ENCODE measurements at regions of chr19 and their contacts with region 1.

Region 1: GRCh38 chr19:47348819-47349795 is at the start of gene DHX34:
- DNase-seq: peak; percentile 99
- H3K4me3 ChIP-seq: peak within 1 kb of the TSS; percentile 86
- H3K4me3 Mint-ChIP-seq: peak within 1 kb of the TSS; percentile 95
- H3K27ac Mint-ChIP-seq: peak within 1 kb of the TSS; percentile 88
- H3K4me1 ChIP-seq: no peaks in the 10 kb centered on the region
- H3K4me1 Mint-ChIP-seq: peaks cover 27% of the 10 kb centered on the region
- H3K27me3 ChIP-seq: no peaks in the 10 kb centered on the region
- H3K27me3 Mint-ChIP-seq: no peaks in the 10 kb centered on the region
- CTCF ChIP-seq: peak; percentile 97 to 98
- total RNA-seq, gene DHX34: 28.7 TPM in 2 replicates

Region 2: DNA sequence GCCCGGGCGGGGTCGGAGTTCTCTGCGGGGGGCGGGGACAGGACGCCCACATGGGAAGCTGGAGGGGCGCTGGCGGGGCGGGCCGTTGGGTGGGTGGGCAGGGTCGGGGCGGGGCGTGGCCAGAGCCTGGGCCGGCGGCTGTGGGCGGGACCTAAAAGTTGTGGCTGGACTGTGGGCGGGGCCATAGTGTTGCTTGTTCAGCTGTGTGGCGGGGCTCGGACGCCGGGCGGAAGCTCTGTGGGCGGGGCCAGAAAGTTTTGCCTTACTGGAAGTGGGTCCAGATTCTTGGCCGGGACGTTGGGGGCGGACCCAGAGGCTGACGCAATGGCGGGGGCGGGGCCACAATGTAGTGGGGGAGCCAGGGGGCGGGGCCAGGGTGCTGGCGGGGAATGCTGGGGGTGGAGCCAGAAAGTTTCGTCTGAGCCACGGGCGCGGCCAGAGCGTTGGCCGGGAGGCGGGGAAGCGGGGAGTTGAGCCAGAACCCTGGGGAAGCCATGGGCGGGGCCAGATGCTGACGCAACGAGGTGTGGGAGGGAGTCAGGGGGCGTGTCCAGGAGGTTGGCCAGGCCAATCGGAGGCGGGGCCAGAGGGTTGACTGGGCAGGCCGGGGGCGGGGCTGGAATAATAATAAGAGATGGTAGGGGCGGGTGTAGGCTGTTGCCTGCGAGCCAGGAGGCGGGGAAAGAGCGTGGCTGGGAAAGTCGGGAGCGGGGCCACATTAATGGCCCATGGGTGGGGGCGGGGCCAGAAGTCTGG is 92.2 kb before region 1 on chr19:
- CTCF ChIA-PET with region 1: interaction called, 4 read pairs
- POLR2A ChIA-PET with region 1: interaction called, 12 read pairs
- intact Hi-C with region 1: no loop called
- DNase-seq: peak; percentile 100
- H3K4me3 ChIP-seq: peak overlapping the region; percentile 76
- H3K4me3 Mint-ChIP-seq: peak overlapping the region; percentile 92
- H3K27ac Mint-ChIP-seq: peak overlapping the region; percentile 96
- H3K4me1 ChIP-seq: peaks cover 22% of the 10 kb centered on the region
- H3K4me1 Mint-ChIP-seq: peaks cover 14% of the 10 kb centered on the region
- H3K27me3 ChIP-seq: no peaks in the 10 kb centered on the region
- H3K27me3 Mint-ChIP-seq: no peaks in the 10 kb centered on the region
- CTCF ChIP-seq: no peak

Region 3: DNA sequence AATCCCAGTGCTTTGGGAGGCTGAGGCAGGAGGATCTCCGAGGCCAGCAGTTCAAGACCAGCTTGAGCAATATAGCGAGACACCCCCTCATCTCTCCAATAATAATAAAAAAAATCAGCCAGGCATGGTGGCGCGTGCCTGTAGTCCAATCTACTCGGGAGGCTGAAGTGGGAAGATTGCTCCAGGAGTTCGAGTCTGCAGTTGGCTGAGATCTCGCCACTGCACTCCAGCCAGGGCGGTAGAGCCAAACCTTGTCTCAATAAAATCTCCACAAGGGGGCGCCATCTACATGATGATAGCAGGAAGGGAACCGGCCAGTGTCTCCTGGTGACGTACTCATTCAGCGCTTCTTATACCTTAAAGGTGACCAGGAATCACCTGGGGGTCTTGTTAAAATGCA is 53.1 kb before region 1 on chr19:
- CTCF ChIA-PET with region 1: interaction called, 8 read pairs
- POLR2A ChIA-PET with region 1: interaction called, 9 read pairs
- intact Hi-C with region 1: loop called (anchors 5 kb)
- DNase-seq: peak; percentile 89 to 92
- H3K4me3 ChIP-seq: no peak overlapping the region
- H3K4me3 Mint-ChIP-seq: no peak overlapping the region
- H3K27ac Mint-ChIP-seq: peak overlapping the region; percentile 64
- H3K4me1 ChIP-seq: no peaks in the 10 kb centered on the region
- H3K4me1 Mint-ChIP-seq: peaks cover 7% of the 10 kb centered on the region
- H3K27me3 ChIP-seq: no peaks in the 10 kb centered on the region
- H3K27me3 Mint-ChIP-seq: no peaks in the 10 kb centered on the region
- CTCF ChIP-seq: peak; percentile 78 to 89

Region 4: GRCh38 chr19:47330466-47330869 is 18.6 kb before region 1 on chr19:
- CTCF ChIA-PET with region 1: interaction called, 11 read pairs
- POLR2A ChIA-PET with region 1: no interaction called
- intact Hi-C with region 1: no loop called
- DNase-seq: no peak
- H3K4me3 ChIP-seq: no peak overlapping the region
- H3K4me3 Mint-ChIP-seq: no peak overlapping the region
- H3K27ac Mint-ChIP-seq: no peak overlapping the region
- H3K4me1 ChIP-seq: no peaks in the 10 kb centered on the region
- H3K4me1 Mint-ChIP-seq: no peaks in the 10 kb centered on the region
- H3K27me3 ChIP-seq: no peaks in the 10 kb centered on the region
- H3K27me3 Mint-ChIP-seq: peaks cover 5% of the 10 kb centered on the region
- CTCF ChIP-seq: no peak

Region 5: DNA sequence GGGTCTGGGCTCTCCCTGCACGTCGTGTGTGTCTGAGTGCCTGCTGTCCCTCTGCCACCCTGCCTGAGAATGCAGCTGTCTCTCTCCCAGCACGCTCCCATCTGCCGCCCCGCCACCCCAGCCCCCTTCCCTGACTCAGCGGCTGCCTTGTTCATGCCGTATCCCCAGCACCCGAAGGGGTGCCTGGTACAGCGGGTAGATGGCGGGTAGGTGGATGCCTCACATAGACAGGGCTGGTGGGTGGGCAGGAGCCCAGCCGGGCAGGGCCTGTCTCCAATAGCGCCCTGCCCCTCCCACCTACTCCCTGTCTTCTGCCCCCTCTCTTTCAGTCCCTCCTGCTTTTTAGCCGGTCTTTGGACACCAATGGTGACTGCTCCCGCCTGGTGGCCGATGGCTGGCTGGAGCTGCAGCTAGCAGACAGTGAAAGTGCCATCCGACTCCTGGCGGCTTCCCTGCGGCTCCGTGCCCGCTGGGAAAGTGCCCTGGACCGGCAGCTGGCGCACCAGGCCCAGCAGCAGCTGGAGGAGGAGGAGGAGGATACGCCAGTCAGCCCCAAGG is 30.4 kb after region 1 on chr19:
- CTCF ChIA-PET with region 1: no interaction called
- POLR2A ChIA-PET with region 1: no interaction called
- intact Hi-C with region 1: no loop called
- DNase-seq: no peak
- H3K4me3 ChIP-seq: no peak overlapping the region
- H3K4me3 Mint-ChIP-seq: no peak overlapping the region
- H3K27ac Mint-ChIP-seq: no peak overlapping the region
- H3K4me1 ChIP-seq: no peaks in the 10 kb centered on the region
- H3K4me1 Mint-ChIP-seq: no peaks in the 10 kb centered on the region
- H3K27me3 ChIP-seq: no peaks in the 10 kb centered on the region
- H3K27me3 Mint-ChIP-seq: no peaks in the 10 kb centered on the region
- CTCF ChIP-seq: no peak

Region 6: GRCh38 chr19:47428177-47428894 is 79.2 kb after region 1 on chr19:
- CTCF ChIA-PET with region 1: interaction called, 25 read pairs
- POLR2A ChIA-PET with region 1: interaction called, 4 read pairs
- intact Hi-C with region 1: loop called (anchors 10 kb)
- DNase-seq: peak; percentile 92 to 98
- H3K4me3 ChIP-seq: peak overlapping the region; percentile 13; the same call in 1 of the 2 replicates
- H3K4me3 Mint-ChIP-seq: no peak overlapping the region
- H3K27ac Mint-ChIP-seq: no peak overlapping the region
- H3K4me1 ChIP-seq: peaks cover 13% of the 10 kb centered on the region
- H3K4me1 Mint-ChIP-seq: no peaks in the 10 kb centered on the region
- H3K27me3 ChIP-seq: peaks cover 3% of the 10 kb centered on the region
- H3K27me3 Mint-ChIP-seq: peaks cover 4% of the 10 kb centered on the region
- CTCF ChIP-seq: no peak